IMR-90 (cell line): ENCODE measurements at regions of chr3 and their contacts with region 1.

Region 1: DNA sequence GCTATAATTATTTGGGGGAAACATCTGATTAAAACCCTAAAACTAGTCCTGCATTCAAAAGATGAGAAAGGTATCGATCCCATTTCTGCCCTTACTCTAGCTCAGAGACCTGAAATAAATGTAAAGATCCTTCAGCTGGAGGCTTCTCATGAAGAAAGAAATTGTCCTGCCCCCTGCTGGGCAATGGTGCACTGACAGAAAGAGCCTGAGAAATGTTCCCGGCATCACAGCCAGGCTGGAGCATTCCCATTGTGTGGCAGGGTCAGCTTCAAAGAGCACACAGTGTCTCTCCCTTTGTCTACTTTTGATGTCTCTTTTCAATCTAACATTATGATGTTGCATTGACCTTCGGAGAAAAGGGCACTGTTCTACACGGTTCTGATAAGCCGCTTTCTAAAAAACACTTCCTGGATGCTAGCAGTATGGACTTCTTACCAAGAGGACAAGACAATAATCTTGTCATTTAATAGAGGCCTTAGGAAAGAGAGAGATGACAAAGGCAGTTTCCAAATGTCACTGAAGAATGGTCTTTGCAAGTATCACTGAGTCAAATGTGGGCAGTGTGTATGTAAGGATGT is 287.5 kb downstream of the MAGI1 start:
- DNase-seq: peak; percentile 34
- ATAC-seq: peak; percentile 89
- H3K4me3 ChIP-seq: no peak overlapping the region
- H3K27ac ChIP-seq: no peak overlapping the region
- H3K4me1 ChIP-seq: no peaks in the 10 kb centered on the region; the same call in 1 of the 2 replicates
- H3K27me3 ChIP-seq: no peaks in the 10 kb centered on the region
- CTCF ChIP-seq: peak; percentile 59
- POLR2A ChIP-seq: no peak
- RAD21 ChIP-seq: peak; percentile 54

Region 2: GRCh38 chr3:65716071-65716751 is 35.0 kb before region 1 on chr3:
- CTCF ChIA-PET with region 1: no interaction called
- POLR2A ChIA-PET with region 1: no interaction called
- dilution Hi-C with region 1: no loop called
- in situ Hi-C with region 1: no loop called
- intact Hi-C with region 1: no loop called
- DNase-seq: no peak
- ATAC-seq: no peak
- H3K4me3 ChIP-seq: no peak overlapping the region
- H3K27ac ChIP-seq: no peak overlapping the region
- H3K4me1 ChIP-seq: peaks cover 8% of the 10 kb centered on the region
- H3K27me3 ChIP-seq: no peaks in the 10 kb centered on the region
- CTCF ChIP-seq: no peak
- POLR2A ChIP-seq: no peak
- RAD21 ChIP-seq: no peak

Region 3: GRCh38 chr3:66066963-66067629 is 315.9 kb after region 1 on chr3:
- CTCF ChIA-PET with region 1: no interaction called
- POLR2A ChIA-PET with region 1: no interaction called
- dilution Hi-C with region 1: no loop called
- in situ Hi-C with region 1: no loop called
- intact Hi-C with region 1: no loop called
- DNase-seq: no peak
- ATAC-seq: no peak
- H3K4me3 ChIP-seq: no peak overlapping the region
- H3K27ac ChIP-seq: no peak overlapping the region
- H3K4me1 ChIP-seq: no peaks in the 10 kb centered on the region
- H3K27me3 ChIP-seq: no peaks in the 10 kb centered on the region
- CTCF ChIP-seq: no peak
- POLR2A ChIP-seq: no peak
- RAD21 ChIP-seq: no peak

Region 4: GRCh38 chr3:66165660-66166059 is 414.4 kb after region 1 on chr3:
- CTCF ChIA-PET with region 1: interaction called, 10 read pairs
- POLR2A ChIA-PET with region 1: no interaction called
- dilution Hi-C with region 1: no loop called
- in situ Hi-C with region 1: no loop called
- intact Hi-C with region 1: no loop called
- DNase-seq: no peak
- ATAC-seq: no peak
- H3K4me3 ChIP-seq: no peak overlapping the region
- H3K27ac ChIP-seq: no peak overlapping the region
- H3K4me1 ChIP-seq: no peaks in the 10 kb centered on the region
- H3K27me3 ChIP-seq: peaks cover 29% of the 10 kb centered on the region
- CTCF ChIP-seq: no peak
- POLR2A ChIP-seq: no peak
- RAD21 ChIP-seq: no peak